HEK293T (cell line): ENCODE measurements at regions of chr14 and their contacts with region 1.

Region 1: DNA sequence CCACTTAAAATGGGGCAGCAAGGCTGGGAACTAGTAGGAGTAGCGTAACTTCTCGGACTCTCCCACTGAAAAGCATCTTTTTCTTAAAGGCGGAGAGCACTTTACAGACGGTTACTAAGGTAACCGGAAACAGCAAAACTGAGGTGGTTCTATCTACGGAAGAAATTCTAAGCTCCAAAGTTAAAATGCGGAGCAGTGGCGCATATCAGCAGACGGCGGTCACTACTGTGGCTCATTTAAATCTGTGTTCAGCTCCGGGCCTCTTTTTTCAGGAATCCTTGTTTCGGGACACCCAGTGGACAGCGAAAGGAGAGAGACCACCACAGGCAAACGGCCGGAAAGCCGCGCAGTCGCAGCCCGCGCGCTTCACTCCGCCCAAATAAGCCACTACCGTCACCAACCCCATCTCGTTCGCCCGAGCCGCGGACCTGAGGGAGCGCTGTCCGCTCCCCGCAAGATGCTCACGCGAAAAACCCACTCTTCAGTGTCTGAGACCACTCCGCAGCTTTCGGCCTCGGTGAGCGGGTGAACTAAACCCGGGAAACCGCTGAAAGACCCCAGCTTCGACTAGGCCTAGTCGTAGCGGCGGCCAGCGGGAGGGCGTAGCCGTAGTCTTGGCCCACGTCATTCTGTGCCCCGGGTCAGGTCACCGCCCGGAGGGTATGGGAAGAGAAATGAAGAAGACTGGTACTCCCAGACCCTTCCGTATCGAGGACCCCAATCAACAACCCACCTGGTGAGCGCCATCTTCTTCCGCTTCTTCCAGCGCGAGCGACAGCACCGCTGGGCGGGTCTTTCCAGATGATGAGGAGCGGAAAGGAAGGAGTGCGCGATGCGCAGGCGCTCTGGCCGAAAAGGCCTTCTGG is at the start of gene SNW1:
- DNase-seq: peak; percentile 95

Region 2: DNA sequence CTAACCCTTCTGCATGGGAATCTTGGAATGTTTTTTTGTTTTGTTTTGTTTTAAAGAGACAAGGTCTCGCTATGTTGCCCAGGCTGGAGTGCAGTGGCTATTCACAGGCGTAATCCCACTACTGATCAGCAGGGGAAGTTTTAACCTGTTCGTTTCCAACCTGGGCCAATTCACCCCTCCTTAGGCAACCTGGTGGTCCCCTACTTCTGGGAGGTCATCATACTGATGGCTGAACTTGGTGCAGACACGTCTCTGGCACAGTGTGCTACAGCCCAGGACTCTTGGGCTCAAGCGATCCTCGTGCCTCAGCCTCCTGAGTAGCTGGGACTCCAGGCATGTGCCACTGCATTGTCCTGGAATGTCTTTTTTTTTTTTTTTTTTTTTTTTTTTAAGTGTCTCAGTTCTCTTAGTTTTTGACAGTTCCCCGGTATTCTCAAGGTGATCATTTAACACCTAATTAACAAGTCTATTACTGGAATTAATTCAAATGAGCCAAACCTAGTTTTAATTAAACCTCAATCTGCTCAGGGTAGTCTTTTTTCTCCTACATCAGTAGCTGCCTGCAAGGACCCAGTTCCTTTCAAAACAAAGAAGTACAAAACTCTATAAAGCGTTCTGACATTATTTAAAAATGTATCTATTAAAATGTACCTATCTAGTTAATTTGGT is 213.0 kb before region 1 on chr14:
- CTCF ChIA-PET with region 1: no interaction called
- POLR2A ChIA-PET with region 1: no interaction called
- DNase-seq: no peak

Region 3: DNA sequence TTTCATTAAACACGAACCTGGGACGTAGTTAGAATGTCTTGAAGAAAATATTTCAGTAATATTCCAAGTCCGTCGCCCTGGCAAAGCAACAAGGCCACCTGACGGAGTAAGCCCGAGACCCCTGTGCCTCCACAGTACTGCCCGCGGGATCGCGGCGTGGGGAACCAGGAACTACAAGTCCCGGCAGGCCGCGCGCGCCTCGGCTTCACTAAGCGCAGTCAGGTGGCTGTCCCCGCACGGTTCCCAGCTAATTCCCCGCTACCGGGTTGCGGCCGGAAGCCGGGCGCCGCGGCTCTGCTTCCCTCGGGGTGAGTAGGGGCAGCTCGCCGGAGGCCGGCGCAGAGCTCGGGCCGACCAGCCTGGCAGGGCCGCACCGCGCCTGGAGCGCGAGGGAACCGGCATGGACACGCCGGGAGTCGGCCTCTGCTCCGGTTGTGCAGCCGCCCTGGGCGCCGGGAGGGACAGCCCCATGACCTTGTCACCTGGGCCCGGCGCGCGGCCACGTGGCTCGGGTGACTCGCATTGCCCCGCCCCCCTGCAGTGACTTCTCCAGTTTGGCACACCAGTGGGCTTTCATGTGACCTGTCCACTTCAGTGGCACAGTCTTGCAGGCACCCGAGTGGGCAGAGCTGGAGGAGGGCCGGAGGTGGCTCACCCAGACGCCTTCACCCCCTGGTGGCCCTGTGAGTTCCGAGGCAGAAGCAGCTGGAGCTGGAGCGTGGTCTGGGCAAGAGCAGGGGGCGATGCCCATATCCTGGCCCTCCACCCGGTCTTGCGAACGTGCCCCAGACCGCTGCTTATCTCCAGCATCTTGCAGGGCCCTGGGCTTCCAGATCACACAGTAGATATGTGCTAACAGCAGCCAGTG is 39.5 kb after region 1 on chr14 and contains the start of gene ADCK1:
- CTCF ChIA-PET with region 1: no interaction called
- POLR2A ChIA-PET with region 1: interaction called, 17 read pairs
- DNase-seq: peak; percentile 87